ENCODE measurements at regions of chr2 and their contacts with region 1.

Region 1: DNA sequence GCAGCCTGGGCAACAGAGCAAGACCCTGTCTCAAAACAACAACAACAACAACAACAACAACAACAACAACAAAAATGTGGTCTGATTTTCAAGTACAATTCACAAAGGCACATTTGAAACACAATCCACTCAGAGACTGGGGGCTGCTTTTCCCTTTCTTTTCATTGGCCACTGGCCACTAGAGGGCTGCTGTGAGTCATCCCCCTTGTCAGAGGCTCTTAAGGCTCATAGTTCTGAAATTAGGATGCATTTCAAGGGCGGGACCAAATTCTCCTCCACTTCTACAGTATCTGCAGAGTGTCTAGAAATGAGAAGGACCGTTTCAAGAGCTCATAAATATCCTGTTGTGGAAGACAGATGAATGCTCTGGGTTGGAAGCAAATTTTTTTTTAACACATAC is 285.4 kb downstream of the NRXN1 start:
- DNase-seq: peak; percentile 53
- ATAC-seq: peak; percentile 38; the same call in 1 of the 2 replicates
- H3K4me3 ChIP-seq: no peak overlapping the region
- H3K27ac ChIP-seq: no peak overlapping the region
- H3K4me1 ChIP-seq: 0 out of 2 replicates have a peak, but pooled peaks cover 3% of the 10 kb centered on the region
- H3K27me3 ChIP-seq: no peaks in the 10 kb centered on the region
- CTCF ChIP-seq: peak; percentile 75

Region 2: GRCh38 chr2:50529600-50530218 is 216.8 kb before region 1 on chr2:
- CTCF ChIA-PET with region 1: no interaction called
- POLR2A ChIA-PET with region 1: no interaction called
- intact Hi-C with region 1: loop called (anchors 10 kb)
- DNase-seq: peak; percentile 70
- ATAC-seq: peak; percentile 77
- H3K4me3 ChIP-seq: no peak overlapping the region
- H3K27ac ChIP-seq: no peak overlapping the region
- H3K4me1 ChIP-seq: no peaks in the 10 kb centered on the region
- H3K27me3 ChIP-seq: peaks cover 29% of the 10 kb centered on the region
- CTCF ChIP-seq: peak; percentile 62

Region 3: DNA sequence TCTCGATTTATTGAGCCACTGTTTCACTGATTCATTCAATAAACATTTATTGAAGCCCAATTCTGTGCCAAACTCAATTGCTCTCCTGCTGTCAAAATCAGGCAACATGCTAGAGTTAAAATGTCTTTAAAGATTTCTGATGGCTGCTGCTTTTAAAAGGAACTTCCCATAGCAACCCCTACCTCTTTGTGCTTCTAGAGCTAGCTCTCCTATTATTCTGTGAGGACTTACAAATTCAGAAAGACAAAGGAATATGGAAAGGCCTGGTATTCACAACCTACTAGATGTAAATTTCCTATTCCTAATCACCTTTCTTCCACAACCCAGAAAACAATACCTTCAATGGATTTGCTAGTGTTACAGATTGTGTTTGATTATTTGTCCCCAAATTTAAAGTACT is 110.1 kb before region 1 on chr2:
- CTCF ChIA-PET with region 1: no interaction called
- POLR2A ChIA-PET with region 1: no interaction called
- intact Hi-C with region 1: no loop called
- DNase-seq: no peak
- ATAC-seq: no peak
- H3K4me3 ChIP-seq: no peak overlapping the region
- H3K27ac ChIP-seq: no peak overlapping the region
- H3K4me1 ChIP-seq: no peaks in the 10 kb centered on the region
- H3K27me3 ChIP-seq: no peaks in the 10 kb centered on the region
- CTCF ChIP-seq: no peak

Region 4: DNA sequence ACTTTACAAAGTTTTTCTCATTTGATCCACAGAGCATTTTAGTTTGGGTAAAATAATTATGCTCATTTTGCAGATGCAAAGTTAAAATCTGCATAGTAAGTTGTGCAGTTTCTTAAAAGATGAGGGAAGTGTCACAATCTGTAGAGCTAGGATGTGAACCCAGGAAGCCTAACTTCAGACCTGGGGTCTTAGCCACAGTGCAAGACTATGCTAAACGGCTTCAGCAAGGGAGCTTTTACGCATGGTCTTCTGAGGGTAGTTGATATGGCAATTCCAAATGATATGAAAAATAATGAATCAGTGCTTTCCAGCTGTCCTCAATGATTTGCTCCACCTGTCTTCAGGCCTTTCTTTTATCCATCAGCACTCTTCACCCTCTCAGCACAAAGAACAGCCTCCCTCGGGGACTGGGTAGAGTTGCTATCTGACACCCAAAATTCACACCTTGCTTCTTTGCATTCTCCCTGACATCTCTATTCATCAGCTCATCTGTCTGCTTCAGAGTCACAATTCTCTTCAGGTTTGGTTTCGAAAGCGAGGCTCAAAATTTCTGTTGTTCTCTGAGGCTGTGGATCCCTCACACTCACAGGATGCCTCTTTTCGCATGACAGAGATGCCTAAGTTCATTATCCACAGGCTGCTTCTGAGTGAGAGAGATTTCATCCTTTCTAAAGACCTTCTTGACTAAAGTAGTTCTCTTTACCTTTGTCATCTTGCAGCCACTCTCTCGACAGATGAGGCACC is 17.0 kb before region 1 on chr2:
- CTCF ChIA-PET with region 1: no interaction called
- POLR2A ChIA-PET with region 1: no interaction called
- intact Hi-C with region 1: no loop called
- DNase-seq: no peak
- ATAC-seq: no peak
- H3K4me3 ChIP-seq: no peak overlapping the region
- H3K27ac ChIP-seq: no peak overlapping the region
- H3K4me1 ChIP-seq: no peaks in the 10 kb centered on the region
- H3K27me3 ChIP-seq: no peaks in the 10 kb centered on the region
- CTCF ChIP-seq: no peak

Region 5: GRCh38 chr2:50953021-50953642 is 206.6 kb after region 1 on chr2:
- CTCF ChIA-PET with region 1: no interaction called
- POLR2A ChIA-PET with region 1: no interaction called
- intact Hi-C with region 1: loop called (anchors 5 kb)
- DNase-seq: peak; percentile 86
- ATAC-seq: peak; percentile 69
- H3K4me3 ChIP-seq: no peak overlapping the region
- H3K27ac ChIP-seq: peak overlapping the region; percentile 92
- H3K4me1 ChIP-seq: peaks cover 29% of the 10 kb centered on the region
- H3K27me3 ChIP-seq: no peaks in the 10 kb centered on the region
- CTCF ChIP-seq: no peak

Region 6: GRCh38 chr2:51084750-51085149 is 338.2 kb after region 1 on chr2:
- CTCF ChIA-PET with region 1: no interaction called
- POLR2A ChIA-PET with region 1: no interaction called
- intact Hi-C with region 1: loop called (anchors 10 kb)
- DNase-seq: peak; percentile 26
- ATAC-seq: no peak; the same call in 1 of the 2 replicates
- H3K4me3 ChIP-seq: no peak overlapping the region
- H3K27ac ChIP-seq: no peak overlapping the region
- H3K4me1 ChIP-seq: peaks cover 2% of the 10 kb centered on the region
- H3K27me3 ChIP-seq: no peaks in the 10 kb centered on the region
- CTCF ChIP-seq: no peak